ENCODE measurements at regions of chr11 and their contacts with region 1.

Region 1: DNA sequence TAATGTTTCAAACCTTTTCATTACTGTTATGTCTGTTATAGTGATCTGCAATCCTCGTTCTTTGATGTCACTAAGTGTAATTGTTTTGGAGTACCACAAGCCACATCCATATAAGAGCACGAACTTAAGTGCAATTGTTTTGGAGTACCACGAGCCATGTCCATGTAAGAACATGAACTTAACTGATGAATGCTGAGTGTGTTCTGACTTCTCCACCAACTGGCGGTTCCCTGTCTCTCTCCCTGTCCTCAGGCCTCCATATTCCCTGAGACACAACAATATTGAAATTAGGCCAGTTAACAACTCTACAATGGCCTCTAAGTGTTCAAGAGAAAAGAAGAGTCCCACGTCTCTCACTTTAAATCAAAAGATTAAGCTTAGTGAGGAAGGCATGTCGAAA is 23.5 kb downstream of the TESMIN start:
- DNase-seq: no peak
- ATAC-seq: no peak
- H3K4me3 Mint-ChIP-seq: no peak overlapping the region
- H3K27ac Mint-ChIP-seq: no peak overlapping the region
- H3K4me1 Mint-ChIP-seq: no peaks in the 10 kb centered on the region
- H3K27me3 Mint-ChIP-seq: no peaks in the 10 kb centered on the region

Region 2: GRCh38 chr11:68436985-68437926 is 290.5 kb before region 1 on chr11:
- CTCF ChIA-PET with region 1: no interaction called
- POLR2A ChIA-PET with region 1: interaction called, 10 read pairs
- intact Hi-C with region 1: no loop called
- DNase-seq: no peak
- ATAC-seq: no peak
- H3K4me3 Mint-ChIP-seq: no peak overlapping the region
- H3K27ac Mint-ChIP-seq: no peak overlapping the region
- H3K4me1 Mint-ChIP-seq: no peaks in the 10 kb centered on the region
- H3K27me3 Mint-ChIP-seq: no peaks in the 10 kb centered on the region

Region 3: GRCh38 chr11:68610452-68611116 is 117.2 kb before region 1 on chr11:
- CTCF ChIA-PET with region 1: no interaction called
- POLR2A ChIA-PET with region 1: no interaction called
- intact Hi-C with region 1: no loop called
- DNase-seq: no peak
- ATAC-seq: no peak
- H3K4me3 Mint-ChIP-seq: no peak overlapping the region
- H3K27ac Mint-ChIP-seq: no peak overlapping the region
- H3K4me1 Mint-ChIP-seq: no peaks in the 10 kb centered on the region
- H3K27me3 Mint-ChIP-seq: no peaks in the 10 kb centered on the region

Region 4: GRCh38 chr11:68677432-68677831 is 50.4 kb before region 1 on chr11:
- CTCF ChIA-PET with region 1: no interaction called
- POLR2A ChIA-PET with region 1: no interaction called
- intact Hi-C with region 1: no loop called
- DNase-seq: no peak
- ATAC-seq: no peak
- H3K4me3 Mint-ChIP-seq: no peak overlapping the region
- H3K27ac Mint-ChIP-seq: no peak overlapping the region
- H3K4me1 Mint-ChIP-seq: no peaks in the 10 kb centered on the region
- H3K27me3 Mint-ChIP-seq: peaks cover 8% of the 10 kb centered on the region

Measured in activated CD4-positive, alpha-beta T cell treated with anti-CD3 and anti-CD28 coated beads for 36 hours (primary cell).